ENCODE measurements at regions of chr10 and their contacts with region 1.

Region 1: GRCh38 chr10:43204943-43205671 is 61.8 kb downstream of the RASGEF1A start:
- H3K4me3 ChIP-seq: no peak overlapping the region
- H3K27ac ChIP-seq: no peak overlapping the region
- H3K4me1 ChIP-seq: no peaks in the 10 kb centered on the region
- CTCF ChIP-seq: peak; percentile 96

Region 2: DNA sequence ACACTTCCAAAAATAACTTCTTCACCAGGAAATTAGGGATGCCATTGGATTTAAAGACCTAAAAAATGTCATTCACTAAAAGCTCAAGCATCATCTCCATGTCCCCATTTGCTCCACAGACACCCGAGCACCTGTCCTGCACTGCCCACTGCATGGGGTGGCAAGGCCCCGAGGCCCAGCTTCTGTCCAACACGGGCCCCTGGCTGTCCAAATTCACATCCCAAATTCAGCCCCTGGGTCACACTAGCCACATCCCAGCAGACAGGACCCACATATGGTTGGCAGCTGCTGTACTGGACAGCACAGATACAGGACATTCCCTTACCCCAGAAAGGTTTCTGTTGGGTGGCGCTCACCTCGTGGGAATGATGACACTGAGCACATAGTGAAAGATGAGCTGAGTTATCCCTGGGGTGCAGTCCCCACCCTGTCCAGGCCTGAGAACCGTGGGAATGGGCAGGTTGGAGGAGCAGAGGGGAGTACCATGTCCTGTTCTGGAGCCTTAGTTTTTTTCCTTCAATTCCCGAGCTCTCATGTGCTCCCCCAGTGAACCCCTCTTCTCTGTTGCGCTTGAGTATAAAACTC is 11.5 kb before region 1 on chr10:
- CTCF ChIA-PET with region 1: interaction called, 21 read pairs
- POLR2A ChIA-PET with region 1: no interaction called
- H3K4me3 ChIP-seq: no peak overlapping the region
- H3K27ac ChIP-seq: no peak overlapping the region
- H3K4me1 ChIP-seq: no peaks in the 10 kb centered on the region
- CTCF ChIP-seq: no peak